ENCODE measurements at regions of chr16 and their contacts with region 1.

Region 1: GRCh38 chr16:84404936-84405639 is 36.8 kb downstream of the ATP2C2 start:
- DNase-seq: peak; percentile 78

Region 2: DNA sequence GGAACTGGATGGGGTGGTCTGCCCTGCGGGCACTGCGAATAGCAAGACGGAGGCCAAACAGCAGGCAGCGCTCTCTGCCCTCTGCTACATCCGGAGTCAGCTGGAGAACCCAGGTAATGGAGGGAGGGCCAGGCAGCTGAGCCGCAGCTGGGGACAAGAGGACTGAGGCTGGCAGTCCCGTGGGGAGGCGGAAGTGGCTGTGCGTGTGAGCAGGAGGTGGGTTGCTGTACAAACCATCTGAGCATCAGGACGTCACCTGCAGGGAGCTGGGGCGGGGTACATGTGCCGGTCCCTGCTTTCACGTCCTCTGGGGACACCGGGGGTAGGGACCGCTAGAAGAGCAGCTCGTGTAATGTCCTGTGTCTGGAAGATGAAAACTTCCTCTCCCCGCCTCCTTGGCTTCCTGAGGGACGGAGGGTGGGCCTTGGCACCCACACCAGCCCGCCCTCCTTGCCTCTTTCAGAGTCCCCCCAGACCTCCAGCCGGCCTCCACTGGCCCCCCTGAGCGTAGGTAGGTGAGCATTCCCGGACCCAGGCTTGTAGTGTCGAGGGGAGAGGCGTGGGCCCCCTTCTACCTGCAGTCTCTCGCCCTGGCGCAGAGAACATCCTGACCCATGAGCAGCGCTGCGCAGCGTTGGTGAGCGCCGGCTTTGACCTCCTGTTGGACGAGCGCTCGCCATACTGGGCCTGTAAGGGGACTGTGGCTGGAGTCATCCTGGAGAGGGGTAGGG is 210.5 kb before region 1 on chr16:
- intact Hi-C with region 1: no loop called
- DNase-seq: no peak

Region 3: DNA sequence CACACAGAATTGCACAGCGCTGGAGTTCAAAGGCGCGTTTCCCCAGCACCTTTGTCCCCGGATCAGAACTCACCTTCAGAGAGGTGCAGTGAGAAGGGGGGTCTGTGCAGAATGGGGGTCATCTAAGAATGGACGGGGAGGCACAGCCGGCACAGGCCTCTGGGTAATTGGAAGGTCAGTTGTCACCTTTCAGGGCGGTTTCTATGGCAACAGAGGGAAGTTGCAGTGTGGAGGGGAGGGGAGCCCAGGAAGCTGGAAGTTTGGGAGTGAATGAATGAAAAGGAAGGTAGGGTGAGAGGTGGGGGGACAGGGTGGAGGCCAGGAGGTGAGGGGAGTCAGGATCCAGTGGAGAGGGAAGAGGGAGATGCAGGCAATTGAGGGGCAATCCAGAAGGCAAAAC is 152.9 kb before region 1 on chr16:
- intact Hi-C with region 1: no loop called
- DNase-seq: peak; percentile 45

Region 4: GRCh38 chr16:84358601-84359295 is 46.3 kb before region 1 on chr16:
- intact Hi-C with region 1: loop called in 1 of 2 experiments (anchors 2 kb)
- DNase-seq: no peak

Region 5: GRCh38 chr16:84416407-84417321 is 11.6 kb after region 1 on chr16:
- intact Hi-C with region 1: no loop called
- DNase-seq: peak; percentile 56

Region 6: GRCh38 chr16:85503679-85504231 is 1098.7 kb after region 1 on chr16:
- intact Hi-C with region 1: no loop called
- DNase-seq: no peak